ENCODE measurements at regions of chr9 and their contacts with region 1.

Region 1: DNA sequence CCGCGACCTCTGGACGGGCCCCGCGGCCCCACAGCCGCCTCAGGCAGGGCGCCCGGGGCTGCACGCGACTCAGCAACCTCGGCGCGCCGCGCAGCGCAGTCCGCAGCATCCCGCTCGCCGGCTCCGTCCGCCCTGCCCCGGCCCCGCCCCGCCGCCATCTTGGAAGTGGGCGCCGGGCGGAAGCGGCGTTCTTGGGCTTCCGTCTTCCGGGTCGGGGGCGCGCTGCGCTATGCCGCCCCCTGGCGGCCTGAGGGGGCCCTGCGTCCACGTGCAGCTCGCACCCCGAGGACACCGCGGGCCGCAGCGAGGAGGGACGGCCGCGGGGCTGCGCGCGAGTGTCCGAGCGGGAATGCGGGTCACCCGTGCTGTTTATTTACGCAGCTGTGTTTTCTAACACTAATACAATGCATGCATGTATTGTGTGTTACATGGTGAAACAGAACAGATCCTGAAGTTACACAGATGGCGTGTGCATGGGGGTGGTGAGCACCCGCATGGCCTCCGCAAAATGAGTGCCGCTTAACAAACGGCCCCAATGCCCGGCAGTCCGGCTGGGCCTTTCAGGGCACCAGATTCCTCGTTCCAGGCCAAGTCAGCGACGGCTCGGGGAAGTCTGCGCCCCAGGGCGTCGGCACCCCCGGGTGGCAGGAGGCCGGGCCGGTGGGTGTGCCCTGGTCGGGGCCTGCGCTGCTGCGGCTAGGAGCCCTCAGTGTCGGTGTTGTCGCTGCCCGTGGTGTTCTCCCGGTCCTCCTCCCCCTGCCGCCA is at the start of gene DNLZ:
- DNase-seq: peak; percentile 66
- ATAC-seq: peak; percentile 76
- H3K4me3 ChIP-seq: peak within 1 kb of the TSS; percentile 65 to 81
- H3K27ac ChIP-seq: peak within 1 kb of the TSS; percentile 98
- H3K4me1 ChIP-seq: peaks cover 10 to 16% of the 10 kb centered on the region in 2 experiments
- H3K27me3 ChIP-seq: no peaks in the 10 kb centered on the region
- CTCF ChIP-seq: peak in 2 of 3 experiments; percentile 77 to 89; a peak in 4 of 6 replicates
- POLR2A ChIP-seq: peak; percentile 54
- RAD21 ChIP-seq: no peak
- total RNA-seq, gene DNLZ: 21.9 TPM

Region 2: DNA sequence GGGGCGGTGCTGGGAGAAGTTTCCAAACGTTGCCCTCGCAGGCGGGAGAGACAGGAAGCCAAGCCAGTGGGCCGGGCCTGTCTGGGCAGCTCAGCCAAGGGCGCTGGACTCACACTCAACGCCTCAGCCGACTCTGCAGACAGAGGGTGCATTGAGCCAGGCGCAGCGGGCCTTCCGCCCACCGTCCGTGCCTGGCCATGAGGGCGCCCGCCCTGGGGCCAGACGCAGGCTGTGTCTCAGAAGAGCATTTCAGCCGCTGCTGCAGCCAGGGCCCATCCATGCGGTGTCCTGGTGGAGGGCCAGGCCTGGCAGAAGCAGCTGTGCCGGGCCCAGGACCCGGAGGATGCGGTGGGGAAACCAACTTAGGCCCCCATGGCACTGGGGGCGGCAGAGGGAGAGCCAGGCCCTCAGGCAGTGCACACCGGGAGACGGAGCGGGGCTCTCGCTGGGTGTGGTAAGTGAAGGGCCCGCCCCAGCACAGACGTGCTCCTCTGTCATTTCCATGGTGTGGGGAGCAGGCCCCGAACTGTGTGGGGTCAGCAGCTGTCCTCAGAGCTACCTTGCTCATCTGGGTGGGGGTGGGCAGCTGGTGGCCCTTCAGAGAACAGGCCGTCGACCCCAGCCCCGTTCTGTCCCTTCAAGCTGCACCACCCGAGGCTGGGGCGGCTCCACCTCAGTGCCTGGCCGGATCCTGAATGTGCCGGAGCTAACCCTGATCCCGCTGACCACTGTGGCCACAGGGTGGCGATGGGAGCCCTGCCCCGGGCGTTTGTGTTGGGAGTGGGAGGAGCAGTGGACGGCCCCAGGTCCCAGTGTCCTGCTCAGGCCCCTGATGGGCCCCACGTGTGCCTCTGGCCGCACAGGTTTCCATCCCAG is 18.3 kb before region 1 on chr9:
- CTCF ChIA-PET with region 1: interaction called, 15 read pairs
- POLR2A ChIA-PET with region 1: interaction called, 8 read pairs
- RAD21 ChIA-PET with region 1: interaction called, 6 to 9 read pairs
- intact Hi-C with region 1: no loop called
- DNase-seq: no peak
- ATAC-seq: peak; percentile 79
- H3K4me3 ChIP-seq: peak overlapping the region in 1 of 2 experiments; percentile 18; a peak in 1 of 4 replicates
- H3K27ac ChIP-seq: peak overlapping the region; percentile 44; the same call in 1 of the 2 replicates
- H3K4me1 ChIP-seq: peaks cover 18 to 36% of the 10 kb centered on the region in 2 experiments; a peak in 3 of 4 replicates
- H3K27me3 ChIP-seq: no peaks in the 10 kb centered on the region
- CTCF ChIP-seq: peak in 2 of 3 experiments; percentile 46 to 53; a peak in 4 of 6 replicates
- POLR2A ChIP-seq: no peak
- RAD21 ChIP-seq: no peak

Region 3: DNA sequence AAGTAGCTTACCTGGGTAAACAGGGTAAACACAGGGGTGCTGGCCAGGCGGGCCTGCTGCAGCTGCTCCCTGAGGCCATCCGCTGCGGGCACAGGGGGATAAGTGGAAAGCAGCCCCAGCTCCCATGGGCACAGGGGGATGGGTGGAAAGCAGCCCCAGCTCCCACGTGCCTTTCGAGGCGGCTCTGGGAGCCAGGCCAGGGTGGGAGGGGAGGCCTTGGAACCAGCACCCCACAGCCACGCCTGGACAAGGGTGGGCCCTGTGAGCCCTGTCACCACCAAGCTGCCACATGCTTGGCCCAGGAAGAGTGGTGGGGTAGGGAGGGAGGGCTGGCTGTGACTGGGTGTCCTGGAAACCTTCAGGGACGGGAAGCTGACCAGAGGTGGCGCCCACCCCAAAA is 17.5 kb after region 1 on chr9:
- CTCF ChIA-PET with region 1: no interaction called
- POLR2A ChIA-PET with region 1: no interaction called
- RAD21 ChIA-PET with region 1: no interaction called
- intact Hi-C with region 1: no loop called
- DNase-seq: no peak
- ATAC-seq: no peak
- H3K4me3 ChIP-seq: no peak overlapping the region
- H3K27ac ChIP-seq: no peak overlapping the region
- H3K4me1 ChIP-seq: no peaks in the 10 kb centered on the region
- H3K27me3 ChIP-seq: no peaks in the 10 kb centered on the region
- CTCF ChIP-seq: no peak
- POLR2A ChIP-seq: no peak
- RAD21 ChIP-seq: no peak